Upper lobe of right lung (tissue), 1 donor: ENCODE measurements at regions of chr12 and their contacts with region 1.

Region 1: GRCh38 chr12:8609061-8609570 is 3.5 kb downstream of the AICDA start:
- DNase-seq: no peak
- ATAC-seq: peak; percentile 74
- H3K4me3 ChIP-seq: no peak overlapping the region
- H3K27ac ChIP-seq: no peak overlapping the region
- H3K4me1 ChIP-seq: no peaks in the 10 kb centered on the region
- H3K27me3 ChIP-seq: no peaks in the 10 kb centered on the region
- CTCF ChIP-seq: peak; percentile 72

Region 2: GRCh38 chr12:8544295-8544694 is 64.8 kb before region 1 on chr12:
- intact Hi-C with region 1: loop called (anchors 10 kb)
- DNase-seq: no peak
- ATAC-seq: peak; percentile 88
- H3K4me3 ChIP-seq: no peak overlapping the region
- H3K27ac ChIP-seq: no peak overlapping the region
- H3K4me1 ChIP-seq: no peaks in the 10 kb centered on the region
- H3K27me3 ChIP-seq: no peaks in the 10 kb centered on the region
- CTCF ChIP-seq: peak; percentile 98